ENCODE measurements at regions of chr1 and their contacts with region 1.

Region 1: GRCh38 chr1:156728597-156729462 is at the start of gene ISG20L2:
- DNase-seq: peak; percentile 98
- H3K4me3 Mint-ChIP-seq: no peak within 1 kb of the TSS
- H3K27ac Mint-ChIP-seq: no peak within 1 kb of the TSS
- H3K4me1 Mint-ChIP-seq: peaks cover 27% of the 10 kb centered on the region
- H3K27me3 Mint-ChIP-seq: no peaks in the 10 kb centered on the region
- total RNA-seq, gene ISG20L2: 47.0 to 58.0 TPM

Region 2: GRCh38 chr1:156489166-156489934 is 239.5 kb before region 1 on chr1:
- CTCF ChIA-PET with region 1: no interaction called
- POLR2A ChIA-PET with region 1: no interaction called
- DNase-seq: peak; percentile 25
- H3K4me3 Mint-ChIP-seq: peak overlapping the region; percentile 7
- H3K27ac Mint-ChIP-seq: peak overlapping the region; percentile 82
- H3K4me1 Mint-ChIP-seq: peaks cover 76% of the 10 kb centered on the region
- H3K27me3 Mint-ChIP-seq: no peaks in the 10 kb centered on the region

Region 3: GRCh38 chr1:156625436-156626078 is 103.3 kb before region 1 on chr1:
- CTCF ChIA-PET with region 1: interaction called, 11 read pairs
- POLR2A ChIA-PET with region 1: no interaction called
- DNase-seq: peak; percentile 71
- H3K4me3 Mint-ChIP-seq: peak overlapping the region; percentile 55
- H3K27ac Mint-ChIP-seq: peak overlapping the region; percentile 21
- H3K4me1 Mint-ChIP-seq: peaks cover 12% of the 10 kb centered on the region
- H3K27me3 Mint-ChIP-seq: peaks cover 66% of the 10 kb centered on the region

Region 4: GRCh38 chr1:156700736-156701531 is 27.9 kb before region 1 on chr1:
- CTCF ChIA-PET with region 1: interaction called, 56 read pairs
- POLR2A ChIA-PET with region 1: no interaction called
- DNase-seq: no peak
- H3K4me3 Mint-ChIP-seq: no peak overlapping the region
- H3K27ac Mint-ChIP-seq: no peak overlapping the region
- H3K4me1 Mint-ChIP-seq: peaks cover 11% of the 10 kb centered on the region
- H3K27me3 Mint-ChIP-seq: peaks cover 33% of the 10 kb centered on the region

Region 5: GRCh38 chr1:156746728-156747631 is 18.1 kb after region 1 on chr1:
- CTCF ChIA-PET with region 1: interaction called, 63 read pairs
- POLR2A ChIA-PET with region 1: interaction called, 8 read pairs
- DNase-seq: peak; percentile 52
- H3K4me3 Mint-ChIP-seq: peak overlapping the region; percentile 95
- H3K27ac Mint-ChIP-seq: peak overlapping the region; percentile 91
- H3K4me1 Mint-ChIP-seq: peaks cover 68% of the 10 kb centered on the region
- H3K27me3 Mint-ChIP-seq: no peaks in the 10 kb centered on the region

Region 6: GRCh38 chr1:156797212-156797871 is 68.5 kb after region 1 on chr1:
- CTCF ChIA-PET with region 1: interaction called, 11 read pairs
- POLR2A ChIA-PET with region 1: interaction called, 3 read pairs
- DNase-seq: peak; percentile 77
- H3K4me3 Mint-ChIP-seq: no peak overlapping the region
- H3K27ac Mint-ChIP-seq: no peak overlapping the region
- H3K4me1 Mint-ChIP-seq: peaks cover 20% of the 10 kb centered on the region
- H3K27me3 Mint-ChIP-seq: no peaks in the 10 kb centered on the region

Region 7: GRCh38 chr1:156892190-156893047 is 163.6 kb after region 1 on chr1:
- CTCF ChIA-PET with region 1: interaction called, 14 read pairs
- POLR2A ChIA-PET with region 1: no interaction called
- DNase-seq: peak; percentile 87
- H3K4me3 Mint-ChIP-seq: peak overlapping the region; percentile 63
- H3K27ac Mint-ChIP-seq: peak overlapping the region; percentile 65
- H3K4me1 Mint-ChIP-seq: peaks cover 24% of the 10 kb centered on the region
- H3K27me3 Mint-ChIP-seq: peaks cover 50% of the 10 kb centered on the region

Region 8: DNA sequence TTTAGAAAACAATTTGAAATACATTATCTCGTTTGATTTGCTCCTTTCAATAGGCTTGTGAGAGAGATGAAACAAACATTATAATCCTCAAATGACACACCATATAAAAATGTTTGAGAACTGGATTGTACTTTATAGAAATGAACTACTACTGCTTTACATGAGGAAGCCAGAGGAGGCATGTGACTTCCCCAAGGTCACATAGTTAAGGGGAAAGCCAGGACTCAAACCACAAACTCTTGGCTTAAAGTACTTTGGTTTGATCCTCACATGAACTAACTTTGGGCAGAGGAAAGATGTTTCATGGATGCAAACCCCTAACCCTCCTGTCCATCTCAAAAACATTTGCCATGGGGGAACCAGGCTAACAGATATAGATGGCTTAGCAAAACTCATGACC is 312.0 kb after region 1 on chr1:
- CTCF ChIA-PET with region 1: no interaction called
- POLR2A ChIA-PET with region 1: no interaction called
- DNase-seq: no peak
- H3K4me3 Mint-ChIP-seq: no peak overlapping the region
- H3K27ac Mint-ChIP-seq: no peak overlapping the region
- H3K4me1 Mint-ChIP-seq: peaks cover 4% of the 10 kb centered on the region
- H3K27me3 Mint-ChIP-seq: peaks cover 70% of the 10 kb centered on the region